Activated CD4-positive, alpha-beta T cell treated with anti-CD3 and anti-CD28 coated beads, Interleukin-2, amount 10 ng/mL, durations not matched to agents 24 days and 14 days (primary cell): ENCODE measurements at regions of chr7 and their contacts with region 1.

Region 1: DNA sequence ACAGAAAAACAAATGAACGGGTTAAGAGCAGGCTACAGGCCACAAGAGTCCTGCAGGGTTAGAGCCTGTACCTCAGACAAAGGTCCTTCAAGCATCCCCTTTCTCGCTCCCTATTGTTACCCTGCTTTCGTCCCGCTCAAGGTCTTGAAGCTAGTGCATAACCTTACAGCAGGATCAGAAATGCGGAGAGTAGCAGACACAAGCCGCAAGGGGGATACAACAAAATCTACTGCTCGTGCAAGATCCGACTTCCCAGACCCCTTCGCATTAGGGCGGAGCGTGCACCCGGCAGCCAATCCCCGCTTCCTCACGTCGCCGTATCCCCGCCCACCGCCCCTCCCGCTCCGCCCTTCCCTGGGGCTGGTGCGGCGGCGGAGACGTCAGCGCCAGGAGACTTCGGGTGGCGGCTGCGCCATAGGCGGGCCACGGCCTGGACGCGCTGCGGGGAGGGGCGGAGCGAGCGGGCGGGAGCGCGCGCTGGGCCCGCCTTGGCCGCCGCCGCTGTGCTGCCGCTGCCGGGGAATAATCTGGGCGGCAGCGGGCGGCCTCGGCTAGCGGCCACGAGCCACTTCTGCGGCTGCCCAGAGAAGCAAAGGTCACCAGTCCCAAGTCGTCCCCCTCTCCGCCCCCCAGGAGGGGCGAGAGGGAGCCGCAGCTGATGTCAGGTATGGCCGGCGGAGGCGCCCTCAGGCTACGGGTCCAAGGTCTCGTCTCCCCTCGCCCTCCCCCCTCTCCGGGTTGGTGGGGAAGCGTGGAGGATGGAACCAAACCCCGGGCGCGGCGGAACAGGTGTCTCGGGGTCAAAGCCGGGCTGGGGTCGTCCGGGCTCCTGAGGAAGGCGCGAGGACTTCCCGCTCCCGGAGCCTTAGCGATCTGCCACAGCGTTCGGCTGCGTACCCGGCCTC is at the start of gene C1GALT1:
- DNase-seq: peak; percentile 98
- H3K4me3 Mint-ChIP-seq: peak within 1 kb of the TSS; percentile 96
- H3K27ac Mint-ChIP-seq: peak within 1 kb of the TSS; percentile 99
- H3K4me1 Mint-ChIP-seq: peaks cover 27% of the 10 kb centered on the region
- H3K27me3 Mint-ChIP-seq: no peaks in the 10 kb centered on the region
- total RNA-seq, gene C1GALT1: 37.2 and 39.3 TPM in 2 replicates

Region 2: DNA sequence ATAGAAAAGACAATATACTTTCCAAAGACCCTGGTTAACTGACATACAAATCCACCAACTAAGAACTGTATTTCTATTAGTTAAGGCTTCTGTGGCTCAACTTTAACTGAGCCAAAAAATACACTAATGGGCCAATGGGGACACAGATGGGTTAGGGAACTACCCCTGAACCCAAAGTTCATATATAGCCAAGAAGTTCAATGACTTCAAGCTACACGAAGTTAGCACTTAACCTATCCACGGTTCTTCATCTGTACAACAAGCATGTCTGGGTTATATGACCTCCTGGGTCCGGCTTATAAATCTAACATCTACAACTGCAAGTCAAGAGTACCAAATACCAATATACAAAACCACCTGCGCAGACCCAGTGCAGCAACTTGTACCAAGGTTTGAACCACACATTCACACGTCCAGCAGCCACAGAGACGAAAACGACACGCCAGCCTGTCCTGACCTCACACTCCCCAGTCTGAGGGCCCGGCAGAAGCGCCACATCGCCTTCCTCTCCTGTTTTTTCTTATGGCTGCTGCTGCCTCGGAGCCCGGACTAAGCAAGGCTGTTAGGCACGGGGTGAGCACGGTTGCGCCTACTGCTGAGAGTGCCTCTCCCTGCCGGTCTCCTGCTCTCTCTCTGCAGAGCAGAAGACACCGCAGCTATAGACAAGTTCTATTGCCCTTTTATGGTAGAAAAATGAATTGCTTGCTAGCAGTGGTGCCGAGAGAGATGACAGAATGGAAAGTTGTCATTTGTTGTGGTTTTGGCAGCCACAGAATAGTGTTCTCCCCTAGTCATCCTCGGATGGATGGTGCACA is 1487.3 kb before region 1 on chr7:
- intact Hi-C with region 1: loop called (anchors 10 kb)
- DNase-seq: peak; percentile 94
- H3K4me3 Mint-ChIP-seq: peak overlapping the region; percentile 89
- H3K27ac Mint-ChIP-seq: peak overlapping the region; percentile 95
- H3K4me1 Mint-ChIP-seq: peaks cover 79% of the 10 kb centered on the region
- H3K27me3 Mint-ChIP-seq: peaks cover 8% of the 10 kb centered on the region

Region 3: GRCh38 chr7:7114706-7115295 is 67.6 kb before region 1 on chr7:
- intact Hi-C with region 1: no loop called
- DNase-seq: no peak
- H3K4me3 Mint-ChIP-seq: no peak overlapping the region
- H3K27ac Mint-ChIP-seq: no peak overlapping the region
- H3K4me1 Mint-ChIP-seq: no peaks in the 10 kb centered on the region
- H3K27me3 Mint-ChIP-seq: peaks cover 2% of the 10 kb centered on the region

Region 4: DNA sequence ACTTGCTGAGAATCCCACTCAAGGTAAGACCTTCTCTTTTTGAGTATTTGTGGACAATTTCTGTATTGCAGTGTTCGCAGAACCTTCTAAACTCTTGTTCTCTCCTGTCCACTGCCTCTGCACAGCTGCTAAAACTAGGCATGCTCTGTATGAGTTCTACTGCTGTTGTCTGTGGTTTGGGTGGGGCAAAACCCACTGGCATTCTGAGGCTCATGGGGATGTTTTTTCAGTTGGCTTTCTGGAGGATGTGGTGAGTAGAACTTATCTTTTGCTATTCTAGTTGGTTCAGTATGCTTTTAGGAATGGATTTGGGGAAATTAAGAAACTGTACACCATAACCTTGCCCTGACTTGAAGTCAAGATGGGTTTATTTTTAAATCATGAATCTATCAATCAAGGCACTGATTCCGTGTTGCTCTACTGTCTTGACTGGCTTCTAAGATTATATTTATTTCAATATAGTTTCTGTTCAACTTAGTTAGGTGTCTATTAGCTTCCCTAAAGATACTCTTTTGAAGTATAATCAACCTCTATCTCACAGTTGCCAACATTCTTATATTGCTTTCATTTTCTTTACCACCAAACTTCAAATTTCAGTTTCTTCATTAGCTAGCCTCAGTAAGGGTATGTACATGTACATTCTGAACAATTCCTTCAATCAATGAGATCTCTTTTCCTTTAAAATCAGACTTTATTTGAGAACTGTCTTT is 25.1 kb before region 1 on chr7:
- intact Hi-C with region 1: loop called (anchors 1 kb)
- DNase-seq: peak; percentile 90
- H3K4me3 Mint-ChIP-seq: peak overlapping the region; percentile 80
- H3K27ac Mint-ChIP-seq: peak overlapping the region; percentile 83
- H3K4me1 Mint-ChIP-seq: peaks cover 46% of the 10 kb centered on the region
- H3K27me3 Mint-ChIP-seq: no peaks in the 10 kb centered on the region

Region 5: GRCh38 chr7:7221602-7222038 is 39.2 kb after region 1 on chr7:
- intact Hi-C with region 1: loop called (anchors 5 kb)
- DNase-seq: no peak
- H3K4me3 Mint-ChIP-seq: no peak overlapping the region
- H3K27ac Mint-ChIP-seq: no peak overlapping the region
- H3K4me1 Mint-ChIP-seq: peaks cover 21% of the 10 kb centered on the region
- H3K27me3 Mint-ChIP-seq: no peaks in the 10 kb centered on the region

Region 6: DNA sequence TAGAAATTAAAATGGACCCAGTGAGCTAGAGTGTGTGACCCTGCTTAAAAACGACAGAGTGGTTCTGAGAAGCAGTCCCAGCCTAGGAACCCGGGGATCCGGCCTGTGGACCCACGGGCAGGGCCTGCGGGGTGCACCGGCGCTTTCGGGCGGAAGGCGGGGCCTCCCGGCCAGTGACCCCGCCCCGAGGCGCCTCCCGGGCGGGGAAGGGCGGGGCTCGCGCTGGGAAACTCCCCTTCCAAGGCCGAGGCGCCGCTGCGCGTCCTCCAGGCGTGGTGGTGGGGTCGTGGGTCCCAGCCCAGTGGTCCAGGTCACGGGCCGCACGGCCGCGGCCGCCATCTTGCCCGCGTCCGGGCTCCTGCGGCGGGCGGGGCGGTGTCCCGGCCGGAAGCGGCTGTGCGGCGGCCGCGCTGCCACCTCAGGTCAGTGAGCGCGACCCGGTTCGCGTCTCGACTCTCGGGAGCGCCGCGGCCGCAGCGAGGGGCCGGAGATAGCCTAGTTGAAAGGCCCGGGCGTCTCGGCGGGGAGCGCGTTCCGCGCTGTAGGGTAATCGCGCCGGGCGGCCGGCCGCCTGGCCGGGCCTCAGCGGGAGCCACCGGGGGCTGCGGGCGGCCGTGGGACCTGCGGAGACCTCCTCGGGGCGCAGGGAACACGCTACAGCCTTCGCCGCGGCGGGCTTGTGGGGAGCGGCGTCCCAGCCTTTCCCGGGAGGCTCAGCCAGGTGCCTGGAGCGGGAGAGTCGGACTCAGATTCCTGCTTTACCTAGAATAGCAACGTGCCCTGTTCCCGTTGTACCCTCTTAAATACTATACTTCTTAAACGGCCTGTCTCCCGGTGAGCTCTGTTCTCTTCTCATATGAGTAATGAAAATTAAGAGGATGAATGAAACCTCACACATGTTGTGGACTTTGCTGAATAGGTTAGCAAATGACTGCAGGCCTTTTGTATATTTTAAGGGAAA is 384.5 kb after region 1 on chr7 and contains the start of gene MIOS:
- intact Hi-C with region 1: loop called (anchors 1 kb)
- DNase-seq: peak; percentile 96
- H3K4me3 Mint-ChIP-seq: peak within 1 kb of the TSS; percentile 84
- H3K27ac Mint-ChIP-seq: peak within 1 kb of the TSS; percentile 79
- H3K4me1 Mint-ChIP-seq: peaks cover 23% of the 10 kb centered on the region
- H3K27me3 Mint-ChIP-seq: no peaks in the 10 kb centered on the region
- total RNA-seq, gene MIOS: 33.3 and 34.7 TPM in 2 replicates

Region 7: DNA sequence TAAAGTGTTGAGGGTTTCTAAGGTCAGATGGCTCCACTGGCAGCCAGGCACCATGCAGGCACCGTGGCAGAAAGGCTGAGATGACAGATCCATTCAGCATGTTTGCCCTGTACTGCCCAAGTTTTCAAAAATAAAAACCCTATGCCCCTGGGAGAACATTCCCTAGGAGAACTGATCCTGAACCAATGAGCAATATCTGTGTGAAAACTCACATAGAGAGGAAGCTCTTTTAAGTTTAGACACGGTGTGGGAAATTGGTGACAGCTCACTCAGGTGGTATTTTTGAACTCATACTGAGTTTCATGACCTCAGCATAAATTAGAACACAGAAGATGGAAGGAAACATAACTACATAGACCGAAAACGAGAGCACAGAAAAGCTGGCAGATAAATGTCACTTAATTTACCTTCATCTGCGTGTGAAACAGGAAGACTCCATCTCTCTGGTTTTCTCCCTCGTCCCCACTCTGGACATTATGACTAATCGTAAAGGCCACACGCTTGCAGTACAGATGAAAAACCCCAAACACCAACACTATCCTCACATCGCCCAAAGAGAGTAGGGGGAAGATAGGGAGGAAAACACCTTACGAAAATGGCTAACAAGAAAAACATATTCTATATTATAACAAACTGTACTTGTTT is 951.8 kb after region 1 on chr7:
- intact Hi-C with region 1: loop called (anchors 2 kb)
- DNase-seq: peak; percentile 81
- H3K4me3 Mint-ChIP-seq: peak overlapping the region; percentile 42
- H3K27ac Mint-ChIP-seq: peak overlapping the region; percentile 65
- H3K4me1 Mint-ChIP-seq: peaks cover 52% of the 10 kb centered on the region
- H3K27me3 Mint-ChIP-seq: no peaks in the 10 kb centered on the region